HepG2 (cell line): ENCODE measurements at regions of chr2 and their contacts with region 1.

Region 1: DNA sequence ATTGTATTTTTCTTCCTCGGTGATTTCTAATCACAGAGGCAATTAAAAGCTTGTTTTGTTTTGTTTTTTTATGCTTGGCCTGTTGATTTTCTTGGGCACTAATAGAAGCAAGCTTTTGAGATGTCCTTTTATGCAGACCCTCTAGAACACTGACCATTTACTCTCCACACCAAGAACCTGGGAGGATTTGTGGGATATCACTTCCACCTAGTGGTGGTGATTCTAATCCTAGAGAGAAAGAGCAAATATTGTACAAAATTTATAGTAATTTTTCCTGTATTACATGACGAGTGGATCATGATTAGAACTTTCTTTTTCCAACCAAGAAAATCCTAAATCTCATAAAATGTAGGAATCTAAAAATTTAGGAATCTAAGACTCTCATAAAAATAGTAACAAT is 23.4 kb downstream of the NEMP2 start:
- DNase-seq: peak; percentile 54
- ATAC-seq: peak; percentile 67
- H3K4me3 ChIP-seq: no peak overlapping the region
- H3K27ac ChIP-seq: no peak overlapping the region
- H3K4me1 ChIP-seq: no peaks in the 10 kb centered on the region
- H3K27me3 ChIP-seq: no peaks in the 10 kb centered on the region
- CTCF ChIP-seq: peak; percentile 63
- EP300 ChIP-seq: no peak
- POLR2A ChIP-seq: no peak
- RAD21 ChIP-seq: peak; percentile 64

Region 2: GRCh38 chr2:190180313-190181122 is 330.6 kb before region 1 on chr2:
- CTCF ChIA-PET with region 1: no interaction called
- POLR2A ChIA-PET with region 1: no interaction called
- in situ Hi-C with region 1: no loop called
- intact Hi-C with region 1: loop called (anchors 5 kb)
- DNase-seq: peak; percentile 86
- ATAC-seq: peak; percentile 94
- H3K4me3 ChIP-seq: peak overlapping the region; percentile 63 to 89 (median 77)
- H3K27ac ChIP-seq: peak overlapping the region; percentile 64
- H3K4me1 ChIP-seq: peaks cover 23% of the 10 kb centered on the region
- H3K27me3 ChIP-seq: no peaks in the 10 kb centered on the region; a peak in 1 of 5 replicates
- CTCF ChIP-seq: peak; percentile 95
- EP300 ChIP-seq: 0 out of 4 replicates have a peak, but pooled peaks of 1 of the 2 experiments have one; percentile 6
- POLR2A ChIP-seq: peak; percentile 31 to 80
- RAD21 ChIP-seq: peak; percentile 92

Region 3: GRCh38 chr2:190328573-190329147 is 182.4 kb before region 1 on chr2:
- CTCF ChIA-PET with region 1: no interaction called
- POLR2A ChIA-PET with region 1: no interaction called
- in situ Hi-C with region 1: loop called (anchors 25 kb)
- intact Hi-C with region 1: loop called (anchors 1 kb)
- DNase-seq: peak; percentile 47
- ATAC-seq: peak; percentile 51
- H3K4me3 ChIP-seq: no peak overlapping the region
- H3K27ac ChIP-seq: no peak overlapping the region
- H3K4me1 ChIP-seq: peaks cover 16% of the 10 kb centered on the region
- H3K27me3 ChIP-seq: no peaks in the 10 kb centered on the region
- CTCF ChIP-seq: peak; percentile 48
- EP300 ChIP-seq: no peak
- POLR2A ChIP-seq: no peak
- RAD21 ChIP-seq: peak; percentile 37; the same call in 1 of the 2 replicates

Region 4: GRCh38 chr2:190343500-190344275 is 167.4 kb before region 1 on chr2 and contains the start of gene INPP1:
- CTCF ChIA-PET with region 1: interaction called, 8 read pairs
- POLR2A ChIA-PET with region 1: no interaction called
- in situ Hi-C with region 1: loop called (anchors 25 kb)
- intact Hi-C with region 1: loop called (anchors 5 kb)
- DNase-seq: no peak
- ATAC-seq: peak; percentile 88
- H3K4me3 ChIP-seq: peak within 1 kb of the TSS; percentile 71 to 92 (median 75)
- H3K27ac ChIP-seq: peak within 1 kb of the TSS; percentile 59
- H3K4me1 ChIP-seq: peaks cover 50% of the 10 kb centered on the region
- H3K27me3 ChIP-seq: no peaks in the 10 kb centered on the region
- CTCF ChIP-seq: no peak
- EP300 ChIP-seq: no peak
- POLR2A ChIP-seq: peak in 1 of 2 experiments; percentile 30; a peak in 1 of 4 replicates
- RAD21 ChIP-seq: peak; percentile 77; the same call in 1 of the 2 replicates
- total RNA-seq, gene INPP1: 13.3 and 15.2 TPM in 2 replicates

Region 5: DNA sequence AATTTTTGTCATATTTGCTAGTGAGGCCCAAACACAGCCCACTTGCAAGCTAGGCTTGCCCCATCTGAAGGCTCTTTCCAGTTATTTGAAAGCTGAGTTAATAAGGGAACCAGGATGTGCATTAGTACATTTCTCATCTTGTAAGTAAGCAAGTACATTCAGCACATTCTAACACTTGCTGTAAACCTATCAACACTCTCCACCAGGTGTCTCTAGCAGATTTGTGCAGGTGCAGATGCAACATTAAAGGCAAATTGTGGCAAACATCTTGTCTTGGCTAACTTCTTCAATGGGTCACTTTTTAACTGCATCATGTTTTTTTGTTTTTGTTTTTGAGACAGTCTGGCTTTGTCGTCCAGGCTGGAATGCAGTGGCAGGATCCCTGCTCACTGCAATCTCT is 128.3 kb before region 1 on chr2:
- CTCF ChIA-PET with region 1: interaction called, 10 read pairs
- POLR2A ChIA-PET with region 1: no interaction called
- in situ Hi-C with region 1: no loop called
- intact Hi-C with region 1: loop called (anchors 1 kb)
- DNase-seq: peak; percentile 62
- ATAC-seq: peak; percentile 76
- H3K4me3 ChIP-seq: no peak overlapping the region
- H3K27ac ChIP-seq: no peak overlapping the region
- H3K4me1 ChIP-seq: peaks cover 23% of the 10 kb centered on the region
- H3K27me3 ChIP-seq: no peaks in the 10 kb centered on the region; a peak in 1 of 5 replicates
- CTCF ChIP-seq: peak; percentile 77
- EP300 ChIP-seq: no peak
- POLR2A ChIP-seq: no peak
- RAD21 ChIP-seq: peak; percentile 60